ENCODE measurements at regions of chrX and their contacts with region 1.

Region 1: DNA sequence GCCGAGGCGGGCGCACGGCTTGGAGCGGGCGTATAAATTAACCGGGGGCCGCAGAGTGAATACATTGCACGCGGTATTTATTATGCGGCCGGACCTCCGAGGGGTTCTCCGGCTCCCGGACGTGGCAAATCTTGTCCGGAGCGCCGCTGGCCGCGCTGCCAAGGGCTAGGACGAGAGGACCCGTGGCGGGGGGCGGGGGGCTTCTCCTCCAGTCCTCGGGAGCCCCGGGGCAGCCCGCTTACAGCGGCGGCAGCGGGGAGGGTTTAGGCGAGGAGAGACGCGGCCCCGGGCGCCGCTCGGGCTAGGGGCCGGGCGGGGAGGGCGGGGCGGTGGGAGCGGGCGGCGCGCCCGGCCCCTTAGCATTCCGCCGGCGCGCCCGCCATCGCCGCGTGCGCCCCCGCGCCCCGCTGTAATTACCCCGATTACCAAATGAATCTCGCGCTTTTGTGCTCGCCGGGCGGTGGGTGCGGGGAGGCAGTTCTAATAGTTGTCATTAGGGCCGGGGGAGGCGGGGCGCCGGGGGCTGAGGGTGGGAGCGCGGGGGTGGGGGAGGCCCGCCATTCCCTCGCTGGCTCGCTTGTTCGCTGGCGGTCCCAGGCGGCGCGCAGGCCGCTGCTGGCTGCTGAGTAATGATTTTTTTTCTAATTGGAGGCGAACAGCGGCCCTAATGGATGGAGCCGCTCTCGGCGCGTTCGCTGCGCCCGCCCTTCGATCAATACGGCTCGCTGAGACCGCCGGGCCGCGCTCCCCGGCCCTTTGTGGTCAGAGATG is 276.6 kb downstream of the BCOR start:
- DNase-seq: peak in 4 of 5 donors; percentile 25 to 62 (median 40)
- ATAC-seq: peak in 1 of 4 donors; percentile 68
- H3K4me3 ChIP-seq: peak overlapping the region; percentile 17 to 57 (median 48)
- H3K27ac ChIP-seq: peak overlapping the region in 2 of 12 donors; percentile 33 to 45
- H3K4me1 ChIP-seq: peaks cover 0 to 21% (median 5%) of the 10 kb centered on the region in 12 donors
- H3K27me3 ChIP-seq: peaks cover 0 to 60% (median 0%) of the 10 kb centered on the region in 9 donors
- CTCF ChIP-seq: no peak
- POLR2A ChIP-seq: no peak

Region 2: DNA sequence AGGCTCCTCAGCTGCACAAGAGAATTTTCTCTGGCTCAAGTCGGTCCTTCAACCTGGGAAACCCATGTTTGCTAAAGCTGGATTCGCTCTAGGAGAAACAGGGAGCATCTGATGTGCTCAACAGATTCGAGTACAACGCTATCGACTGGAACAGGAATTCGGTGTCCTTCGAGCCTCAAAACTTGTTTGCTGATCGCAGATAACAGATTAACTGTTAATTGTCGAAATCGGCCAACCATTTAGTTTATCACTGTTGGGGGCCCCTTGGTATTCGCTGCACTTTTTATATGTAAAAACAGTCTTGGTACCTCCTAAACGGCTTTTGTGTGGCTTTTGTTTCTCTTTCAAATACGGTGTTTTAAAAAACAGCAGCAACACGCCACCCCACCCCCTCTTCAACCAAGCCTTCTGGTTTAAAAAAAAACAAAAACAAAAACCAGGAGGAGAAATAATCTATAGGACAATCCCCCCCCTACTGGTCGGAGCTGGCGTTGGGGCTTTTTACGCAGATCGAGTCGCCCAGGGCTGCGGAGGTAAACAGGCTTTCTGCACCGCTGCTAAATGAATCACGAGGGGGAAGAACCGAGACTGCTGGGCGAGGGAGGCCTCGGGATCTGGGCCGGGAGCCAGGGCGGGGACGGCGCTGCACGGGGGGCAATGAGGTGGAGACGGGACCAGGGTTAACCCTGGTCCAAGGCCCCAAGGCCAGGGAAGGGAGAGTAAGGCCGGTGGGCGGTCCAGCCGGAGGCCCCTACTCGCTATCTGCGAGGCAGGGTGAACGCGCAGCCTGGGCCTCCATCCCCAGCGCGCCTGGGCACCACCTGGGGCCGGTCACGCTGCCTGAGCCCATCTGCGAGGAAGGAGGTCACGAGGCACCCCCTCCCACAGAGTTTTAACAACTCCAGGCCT is 348.3 kb after region 1 on chrX:
- intact Hi-C with region 1: loop called in 3 of 10 experiments (anchors 10 kb)
- DNase-seq: peak in 4 of 5 donors; percentile 34 to 75 (median 46)
- ATAC-seq: no peak
- H3K4me3 ChIP-seq: peak overlapping the region in 2 of 12 donors; percentile 19 to 43
- H3K27ac ChIP-seq: peak overlapping the region in 2 of 12 donors; percentile 74 to 76
- H3K4me1 ChIP-seq: peaks cover 0 to 56% (median 19%) of the 10 kb centered on the region in 12 donors
- H3K27me3 ChIP-seq: peaks cover 0 to 81% (median 0%) of the 10 kb centered on the region in 9 donors
- CTCF ChIP-seq: peak in 8 of 12 donors; percentile 15 to 35 (median 23)
- POLR2A ChIP-seq: no peak

Measured in heart left ventricle (tissue), 16 donors.